Common myeloid progenitor, CD34-positive (primary cell): ENCODE measurements at regions of chr3 and their contacts with region 1.

Region 1: DNA sequence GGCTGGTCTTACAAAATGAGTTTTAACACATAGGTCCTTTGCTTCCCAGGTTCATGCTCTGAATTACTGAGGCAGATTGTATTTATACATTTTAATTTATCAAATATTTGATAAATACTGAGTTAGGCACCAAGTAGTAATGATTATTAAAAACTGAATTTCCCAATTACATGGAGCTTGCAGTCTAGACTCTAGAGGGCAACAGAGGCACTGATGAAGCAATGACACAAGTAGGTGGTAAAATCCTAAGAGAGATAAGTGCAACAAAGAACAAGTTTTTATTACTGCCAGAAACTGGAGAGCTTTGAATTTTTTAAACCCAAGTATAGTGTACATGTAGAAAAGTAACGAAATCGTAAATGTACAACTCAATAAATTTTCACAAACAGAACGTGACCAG is 406.2 kb upstream of the RARB start:
- DNase-seq: peak in 2 of 3 donors; percentile 0 to 1
- H3K4me3 ChIP-seq: no peak overlapping the region
- H3K27ac ChIP-seq: no peak overlapping the region
- H3K4me1 ChIP-seq: no peaks in the 10 kb centered on the region
- H3K27me3 ChIP-seq: no peaks in the 10 kb centered on the region

Region 2: DNA sequence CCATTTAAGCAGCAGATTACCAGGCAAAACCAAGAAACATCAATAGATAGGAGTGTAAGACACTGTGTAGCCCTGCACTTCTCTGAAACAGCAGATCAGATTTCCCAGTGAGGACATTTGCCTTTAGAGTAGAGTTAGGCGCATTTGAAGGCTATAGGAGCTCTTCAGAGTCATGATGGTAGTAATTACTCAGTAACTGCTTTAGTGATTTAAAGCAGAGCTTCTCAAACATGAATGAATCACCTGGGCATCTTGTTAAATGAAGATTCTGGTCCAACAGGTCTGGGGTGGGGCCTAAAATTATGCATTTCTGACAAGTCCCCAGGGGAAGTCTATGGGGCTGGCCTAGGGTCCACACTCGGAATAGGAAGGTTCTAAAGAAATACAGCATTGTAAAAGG is 564.1 kb before region 1 on chr3:
- CTCF ChIA-PET with region 1: no interaction called
- POLR2A ChIA-PET with region 1: no interaction called
- DNase-seq: no peak
- H3K4me3 ChIP-seq: no peak overlapping the region
- H3K27ac ChIP-seq: no peak overlapping the region
- H3K4me1 ChIP-seq: peaks cover 0 to 2% (median 0%) of the 10 kb centered on the region in 4 experiments
- H3K27me3 ChIP-seq: no peaks in the 10 kb centered on the region

Region 3: DNA sequence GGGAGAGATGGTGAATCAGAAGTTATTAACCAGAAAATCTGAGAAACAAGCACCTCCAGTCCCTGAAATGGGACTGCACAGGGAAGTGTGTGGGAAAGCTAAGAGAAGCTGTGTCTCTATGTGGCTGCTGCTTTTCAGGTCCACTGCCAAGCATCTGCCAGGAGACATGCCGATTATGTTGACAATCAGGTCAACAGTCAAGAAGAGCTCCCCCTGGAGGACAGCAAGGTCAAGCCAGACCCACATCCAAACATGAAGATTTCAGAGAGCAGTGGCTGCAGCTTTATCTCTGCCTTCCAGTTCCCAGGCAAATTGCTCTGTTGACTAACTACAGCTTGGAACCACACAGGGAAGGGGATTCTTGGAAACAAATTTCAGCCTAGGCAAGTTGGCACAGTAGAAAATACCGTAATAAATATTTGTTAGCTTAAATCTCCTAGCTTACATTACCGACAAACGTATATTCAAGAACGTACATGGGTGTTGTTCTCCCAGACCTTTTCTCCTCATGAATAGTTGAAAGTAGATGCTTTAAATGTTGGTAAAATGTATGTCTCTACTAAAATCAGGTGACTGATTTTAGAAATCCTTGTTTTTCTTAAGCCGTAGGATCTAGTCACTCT is 11.7 kb after region 1 on chr3:
- CTCF ChIA-PET with region 1: interaction called, 15 read pairs
- POLR2A ChIA-PET with region 1: no interaction called
- DNase-seq: peak; percentile 29 to 59 (median 54)
- H3K4me3 ChIP-seq: no peak overlapping the region
- H3K27ac ChIP-seq: no peak overlapping the region
- H3K4me1 ChIP-seq: no peaks in the 10 kb centered on the region
- H3K27me3 ChIP-seq: peaks cover 0 to 2% (median under 1%) of the 10 kb centered on the region in 5 experiments